ENCODE measurements at regions of chr2 and their contacts with region 1.

Region 1: DNA sequence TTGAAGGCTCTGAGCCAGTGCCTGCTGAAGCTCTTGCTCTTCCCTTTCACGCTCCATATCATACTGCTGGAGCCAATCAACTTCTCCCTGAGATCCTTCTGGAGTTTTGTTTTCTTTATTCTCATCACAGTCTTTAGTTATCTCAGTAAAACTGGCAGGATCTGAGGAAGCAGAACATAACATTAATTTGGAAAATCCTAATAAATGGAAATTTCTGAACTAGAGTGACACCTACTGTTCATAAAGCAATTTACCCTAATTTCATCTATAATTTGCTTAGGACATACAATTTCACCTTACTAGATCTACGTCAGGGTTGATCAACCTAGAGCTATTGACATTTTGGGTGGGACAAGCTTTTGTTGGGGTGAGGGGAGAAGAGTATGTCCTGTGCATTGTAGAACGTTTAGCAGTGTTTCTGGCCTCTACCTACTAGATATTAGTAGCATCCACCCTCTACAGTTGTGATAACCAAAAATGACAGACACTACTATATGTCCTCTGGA is 47.1 kb downstream of the VIL1 start:
- DNase-seq: peak in 1 of 2 donors; percentile 56
- H3K4me3 ChIP-seq: no peak overlapping the region
- H3K27ac ChIP-seq: no peak overlapping the region
- H3K4me1 ChIP-seq: peaks cover 0 to 8% (median 4%) of the 10 kb centered on the region in 4 donors
- H3K27me3 ChIP-seq: no peaks in the 10 kb centered on the region
- CTCF ChIP-seq: peak in 4 of 7 experiments; percentile 32 to 49 (median 44)
- EP300 ChIP-seq: no peak
- POLR2A ChIP-seq: no peak

Region 2: DNA sequence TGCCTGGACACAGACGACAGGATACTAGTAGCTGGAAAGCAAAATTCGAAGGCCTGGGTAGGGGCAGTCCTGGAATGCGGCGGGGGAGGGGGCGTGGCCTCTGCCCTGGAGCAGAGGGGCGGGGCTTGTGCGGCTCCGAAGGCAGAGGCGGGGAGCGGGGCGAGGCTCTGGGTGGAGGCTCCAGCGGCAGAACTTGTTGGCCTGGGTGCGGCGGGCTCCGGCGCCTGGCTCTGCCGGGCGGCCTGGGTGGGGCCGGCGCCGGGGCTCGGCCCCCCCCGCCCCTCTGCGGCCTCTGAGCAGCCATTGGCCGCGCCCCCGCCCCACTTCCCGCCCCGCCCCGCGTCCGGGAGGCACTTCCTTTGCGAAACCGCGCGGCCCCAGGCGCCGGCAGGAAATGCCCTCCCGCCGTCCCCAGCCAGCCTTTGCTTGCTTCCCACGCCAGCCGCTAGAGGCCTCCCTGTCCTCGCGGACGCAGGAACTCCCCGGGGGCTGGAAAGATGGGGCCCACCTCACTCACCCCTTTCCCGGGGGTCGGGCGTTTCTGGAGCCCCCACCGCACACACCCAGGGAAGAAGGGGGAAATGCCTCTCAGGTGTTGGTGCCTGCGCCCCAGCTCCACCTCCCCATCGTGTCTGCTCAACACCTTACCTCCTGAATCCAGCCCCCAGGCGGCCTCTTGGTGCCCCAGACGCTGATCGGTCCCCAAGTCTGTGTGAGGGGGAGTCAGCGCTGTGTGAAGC is 59.7 kb before region 1 on chr2:
- intact Hi-C with region 1: loop called (anchors 5 kb)
- DNase-seq: peak; percentile 97 to 98
- H3K4me3 ChIP-seq: peak overlapping the region; percentile 43 to 52 (median 44)
- H3K27ac ChIP-seq: peak overlapping the region; percentile 86 to 100 (median 90)
- H3K4me1 ChIP-seq: peaks cover 53 to 65% (median 64%) of the 10 kb centered on the region in 4 donors
- H3K27me3 ChIP-seq: no peaks in the 10 kb centered on the region
- CTCF ChIP-seq: peak in 5 of 7 experiments; percentile 74 to 84 (median 79)
- EP300 ChIP-seq: no peak
- POLR2A ChIP-seq: peak in 1 of 4 donors; percentile 9

Measured in stomach (tissue), 19 donors.